Activated naive CD4-positive, alpha-beta T cell treated with anti-CD3 and anti-CD28 coated beads for 36 hours (primary cell): ENCODE measurements at regions of chr15 and their contacts with region 1.

Region 1: DNA sequence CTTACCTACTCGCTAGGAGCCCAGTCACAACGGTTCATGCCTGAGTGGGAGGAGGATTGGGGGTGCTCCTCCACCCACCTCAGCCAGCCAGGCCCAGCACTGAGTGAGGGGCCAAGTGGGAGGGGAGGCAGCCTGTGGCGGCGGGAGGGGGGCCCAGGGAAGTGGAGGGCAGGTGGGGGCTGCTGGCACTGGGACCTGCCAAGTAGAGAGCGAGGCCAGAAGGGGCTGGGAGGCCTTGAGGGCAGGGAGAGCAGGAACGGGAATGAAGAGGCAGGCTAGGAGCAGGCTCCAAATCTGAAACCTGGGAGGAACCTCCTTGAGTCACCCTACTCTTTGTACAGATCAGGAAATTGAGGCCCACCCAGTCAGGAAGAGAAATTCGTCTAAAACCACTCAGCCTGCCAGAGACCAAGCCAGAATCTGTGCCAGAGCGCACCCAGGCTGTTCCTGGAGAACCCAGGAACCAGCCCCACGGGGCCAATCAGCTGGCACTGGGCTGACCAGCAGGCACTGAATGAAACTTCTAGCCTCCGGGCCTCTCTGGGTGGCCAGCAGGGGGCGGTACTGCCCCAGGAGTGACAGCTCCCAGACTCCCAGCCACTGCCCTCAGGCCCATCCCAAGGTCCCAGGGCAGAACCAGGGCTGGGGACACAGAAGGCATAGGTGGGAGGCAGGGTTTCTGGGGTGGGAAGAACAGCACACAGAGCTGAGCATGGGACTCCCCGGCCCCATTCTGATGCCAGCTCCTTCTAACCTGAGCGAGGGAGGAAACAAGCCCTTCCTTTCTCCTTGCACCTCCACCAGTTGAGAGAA is 14.8 kb upstream of the CYP11A1 start:
- DNase-seq: peak; percentile 82
- H3K4me3 Mint-ChIP-seq: no peak overlapping the region
- H3K27ac Mint-ChIP-seq: peak overlapping the region; percentile 99
- H3K4me1 Mint-ChIP-seq: peaks cover 79% of the 10 kb centered on the region
- H3K27me3 Mint-ChIP-seq: no peaks in the 10 kb centered on the region

Region 2: DNA sequence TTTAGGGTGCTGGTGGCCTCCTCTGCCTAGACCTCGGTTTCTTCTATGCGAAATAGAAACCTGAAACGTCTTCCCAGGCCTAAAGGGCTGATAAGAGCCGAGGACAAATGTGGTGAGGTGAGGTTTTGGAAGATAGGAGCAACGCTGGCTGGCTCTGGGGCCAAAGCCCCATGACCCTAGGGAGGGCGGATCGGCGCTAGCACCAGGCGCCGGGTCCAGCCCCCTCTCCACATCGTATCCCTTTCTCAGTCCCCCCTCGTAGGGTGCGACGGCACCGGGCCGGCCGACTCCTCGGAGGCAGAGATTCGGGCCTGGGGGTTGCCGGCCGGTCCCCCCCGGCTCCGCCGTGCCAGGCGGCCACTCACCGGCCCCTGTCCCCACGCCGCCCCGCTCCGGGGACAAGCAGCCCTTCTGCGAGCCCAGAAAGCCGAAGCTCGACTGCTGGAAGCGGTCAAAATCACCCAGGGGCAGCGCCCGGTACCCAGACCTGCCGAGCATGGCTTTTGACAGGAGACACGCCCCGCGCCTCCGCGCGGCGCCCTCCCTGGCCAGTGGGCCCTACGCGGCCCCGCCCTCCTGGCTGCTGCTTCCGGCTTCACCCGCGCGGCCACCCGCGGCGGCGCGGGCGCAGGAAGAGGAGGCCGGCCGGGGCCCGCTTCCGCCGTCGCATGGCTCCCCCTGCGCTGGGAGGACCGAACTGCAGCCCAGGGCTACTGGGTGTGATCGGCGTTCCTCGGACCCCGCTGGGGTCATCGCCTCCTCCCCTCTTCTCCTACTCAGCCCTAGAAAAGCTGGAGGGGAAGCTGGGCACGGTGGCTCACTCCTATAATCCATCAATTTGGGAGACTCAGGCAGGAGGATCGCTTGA is 390.2 kb before region 1 on chr15 and contains the start of gene STOML1:
- CTCF ChIA-PET with region 1: no interaction called
- intact Hi-C with region 1: loop called (anchors 5 kb)
- DNase-seq: peak; percentile 95
- H3K4me3 Mint-ChIP-seq: peak within 1 kb of the TSS; percentile 95
- H3K27ac Mint-ChIP-seq: peak within 1 kb of the TSS; percentile 83
- H3K4me1 Mint-ChIP-seq: peaks cover 49% of the 10 kb centered on the region
- H3K27me3 Mint-ChIP-seq: no peaks in the 10 kb centered on the region
- total RNA-seq, gene STOML1: 8.7 to 9.5 TPM

Region 3: GRCh38 chr15:74402873-74403587 is 20.8 kb after region 1 on chr15:
- CTCF ChIA-PET with region 1: interaction called, 28 read pairs
- intact Hi-C with region 1: loop called (anchors 1 kb)
- DNase-seq: peak; percentile 97
- H3K4me3 Mint-ChIP-seq: peak overlapping the region; percentile 53
- H3K27ac Mint-ChIP-seq: peak overlapping the region; percentile 87
- H3K4me1 Mint-ChIP-seq: peaks cover 65% of the 10 kb centered on the region
- H3K27me3 Mint-ChIP-seq: no peaks in the 10 kb centered on the region

Region 4: DNA sequence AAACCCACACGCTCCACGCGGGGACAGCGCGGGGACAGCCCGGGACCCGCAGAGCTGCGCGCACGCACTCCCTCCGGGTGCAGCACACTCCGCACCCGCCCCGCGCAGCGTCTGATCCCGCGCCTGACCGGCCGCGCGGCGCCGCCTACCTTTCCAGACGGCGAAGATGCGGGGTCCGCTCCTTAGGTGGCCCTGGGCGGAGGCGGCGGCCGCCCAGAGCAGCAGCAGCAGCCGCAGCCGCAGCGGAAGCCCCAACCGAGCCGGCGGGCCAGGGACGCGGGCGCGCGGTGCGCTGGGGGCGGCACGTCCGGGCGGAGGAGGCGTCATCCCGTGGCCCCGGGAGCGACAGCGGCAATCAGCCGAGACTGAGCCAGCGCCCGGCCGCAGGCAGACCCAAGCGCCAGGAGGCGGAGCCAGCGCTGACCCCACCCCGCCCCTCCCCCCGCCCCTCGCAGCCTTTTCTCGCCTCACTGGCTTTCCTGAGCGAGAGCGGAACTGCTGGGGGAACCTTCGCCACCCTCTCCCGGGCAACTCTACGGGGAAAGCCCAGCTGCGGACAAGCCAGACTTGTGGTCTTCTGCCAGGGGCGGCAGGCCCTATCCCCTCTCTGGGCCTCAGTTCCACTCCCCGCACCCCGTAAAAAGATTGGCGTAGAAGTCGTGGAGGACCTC is 51.5 kb after region 1 on chr15 and contains the start of gene SEMA7A:
- CTCF ChIA-PET with region 1: interaction called, 399 read pairs
- intact Hi-C with region 1: loop called (anchors 1 kb)
- DNase-seq: peak; percentile 87
- H3K4me3 Mint-ChIP-seq: peak within 1 kb of the TSS; percentile 90
- H3K27ac Mint-ChIP-seq: peak within 1 kb of the TSS; percentile 88
- H3K4me1 Mint-ChIP-seq: peaks cover 72% of the 10 kb centered on the region
- H3K27me3 Mint-ChIP-seq: no peaks in the 10 kb centered on the region
- total RNA-seq, gene SEMA7A: 45.7 to 46.9 TPM

Region 5: DNA sequence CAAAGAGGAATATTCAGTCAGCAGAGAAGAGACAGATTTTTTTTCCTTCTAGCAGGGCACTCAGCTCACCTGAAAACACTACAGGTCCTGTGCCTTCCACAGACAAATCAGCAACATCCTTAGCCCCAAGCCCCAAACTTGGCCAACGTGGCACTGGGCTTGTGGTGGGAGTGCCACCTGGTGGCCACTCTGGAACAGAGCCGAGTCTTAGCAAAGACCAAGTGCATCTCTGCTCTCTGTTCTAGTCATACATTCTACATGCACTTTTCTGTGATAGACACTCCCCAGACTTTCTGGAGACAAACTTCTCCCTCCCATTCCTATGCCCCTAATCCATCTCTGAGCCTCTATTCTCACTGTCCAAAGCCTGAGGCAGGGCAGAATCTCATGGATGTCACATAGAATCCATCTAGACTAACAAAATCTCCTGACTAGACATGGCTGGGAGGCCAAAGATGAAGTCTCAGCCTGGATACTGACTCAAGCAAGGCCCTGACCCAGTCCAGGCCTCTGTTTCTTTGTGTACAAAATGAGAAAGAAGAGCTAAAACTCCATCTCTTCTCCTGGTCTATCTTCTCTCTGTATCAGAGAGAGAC is 56.6 kb after region 1 on chr15:
- CTCF ChIA-PET with region 1: interaction called, 399 read pairs
- intact Hi-C with region 1: loop called (anchors 1 kb)
- DNase-seq: peak; percentile 88
- H3K4me3 Mint-ChIP-seq: no peak overlapping the region
- H3K27ac Mint-ChIP-seq: peak overlapping the region; percentile 14
- H3K4me1 Mint-ChIP-seq: peaks cover 35% of the 10 kb centered on the region
- H3K27me3 Mint-ChIP-seq: no peaks in the 10 kb centered on the region

Region 6: DNA sequence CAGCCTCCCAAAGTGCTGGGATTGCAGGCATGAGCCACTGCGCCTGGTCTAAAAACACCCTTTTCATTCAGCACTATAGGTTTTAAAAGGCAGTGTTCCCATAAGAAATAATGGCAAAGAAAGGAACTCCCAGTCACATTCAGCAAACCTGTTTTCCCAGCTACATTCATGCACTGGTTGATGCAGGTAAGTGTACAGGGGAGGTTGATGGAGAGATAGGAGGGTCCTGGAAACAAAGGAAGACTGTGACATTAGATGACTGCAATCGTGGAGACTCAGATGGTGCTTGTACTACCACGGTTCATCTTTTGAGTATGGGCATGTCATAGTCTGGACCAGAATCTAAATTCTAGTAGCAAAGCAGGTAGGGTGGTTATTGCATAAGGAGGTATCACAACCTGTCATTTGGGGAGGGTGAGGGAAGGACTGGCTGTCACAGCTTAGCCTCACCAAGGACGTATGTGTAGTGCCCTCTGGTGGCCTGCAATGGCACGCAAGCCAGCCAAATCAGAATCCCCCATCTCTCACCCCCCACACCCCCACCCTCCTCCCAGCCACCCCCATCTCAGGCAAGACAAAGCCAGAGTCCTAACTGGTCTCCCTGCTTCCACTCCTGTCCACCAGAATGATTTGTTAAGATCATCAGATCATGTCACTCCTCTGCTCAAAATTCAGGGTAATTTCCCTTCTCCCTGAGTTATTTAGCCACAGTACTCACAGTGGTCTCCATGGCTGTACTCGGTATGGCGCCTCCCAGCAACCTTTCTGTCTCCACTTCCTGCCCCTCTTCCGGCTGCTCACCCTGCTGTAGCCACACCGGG is 107.5 kb after region 1 on chr15:
- CTCF ChIA-PET with region 1: interaction called, 6 read pairs
- intact Hi-C with region 1: loop called (anchors 1 kb)
- DNase-seq: peak; percentile 83
- H3K4me3 Mint-ChIP-seq: no peak overlapping the region
- H3K27ac Mint-ChIP-seq: no peak overlapping the region
- H3K4me1 Mint-ChIP-seq: peaks cover 9% of the 10 kb centered on the region
- H3K27me3 Mint-ChIP-seq: no peaks in the 10 kb centered on the region

Region 7: GRCh38 chr15:74781431-74782258 is 399.4 kb after region 1 on chr15 and contains the start of gene CSK:
- CTCF ChIA-PET with region 1: no interaction called
- intact Hi-C with region 1: loop called (anchors 2 kb)
- DNase-seq: peak; percentile 74
- H3K4me3 Mint-ChIP-seq: peak within 1 kb of the TSS; percentile 93
- H3K27ac Mint-ChIP-seq: peak within 1 kb of the TSS; percentile 99
- H3K4me1 Mint-ChIP-seq: peaks cover 46% of the 10 kb centered on the region
- H3K27me3 Mint-ChIP-seq: no peaks in the 10 kb centered on the region
- total RNA-seq, gene CSK: 272 to 282 TPM